PC-3 (cell line): ENCODE measurements at regions of chrX and their contacts with region 1.

Region 1: DNA sequence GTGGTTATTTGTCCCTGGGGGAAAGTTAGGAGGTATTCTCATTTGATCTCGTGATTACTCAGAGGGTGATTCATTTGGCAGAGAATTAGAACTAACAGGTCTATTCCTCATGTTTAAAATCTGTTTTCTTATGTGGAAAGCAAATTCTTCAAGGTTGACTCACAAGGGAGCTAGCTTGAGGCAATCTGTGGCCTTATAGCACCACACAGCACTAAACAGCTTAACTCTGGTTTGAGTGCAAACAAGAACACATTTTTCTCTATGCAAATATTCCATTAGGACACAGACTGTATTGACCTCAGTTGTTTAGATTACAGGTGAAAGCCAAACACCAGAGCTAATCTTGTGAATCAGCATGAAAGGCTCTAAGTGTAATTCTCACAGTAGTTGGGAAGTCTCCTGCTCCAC is 694.4 kb upstream of the POU3F4 start:
- DNase-seq: peak; percentile 97
- ATAC-seq: peak; percentile 92
- H3K4me3 ChIP-seq: no peak overlapping the region
- H3K27ac ChIP-seq: peak overlapping the region; percentile 80
- H3K4me1 ChIP-seq: peaks cover 35% of the 10 kb centered on the region
- H3K27me3 ChIP-seq: no peaks in the 10 kb centered on the region
- CTCF ChIP-seq: no peak

Region 2: GRCh38 chrX:82528525-82528924 is 285.1 kb before region 1 on chrX:
- CTCF ChIA-PET with region 1: no interaction called
- POLR2A ChIA-PET with region 1: no interaction called
- intact Hi-C with region 1: no loop called
- DNase-seq: no peak
- ATAC-seq: no peak
- H3K4me3 ChIP-seq: no peak overlapping the region
- H3K27ac ChIP-seq: no peak overlapping the region
- H3K4me1 ChIP-seq: no peaks in the 10 kb centered on the region
- H3K27me3 ChIP-seq: no peaks in the 10 kb centered on the region
- CTCF ChIP-seq: no peak

Region 3: DNA sequence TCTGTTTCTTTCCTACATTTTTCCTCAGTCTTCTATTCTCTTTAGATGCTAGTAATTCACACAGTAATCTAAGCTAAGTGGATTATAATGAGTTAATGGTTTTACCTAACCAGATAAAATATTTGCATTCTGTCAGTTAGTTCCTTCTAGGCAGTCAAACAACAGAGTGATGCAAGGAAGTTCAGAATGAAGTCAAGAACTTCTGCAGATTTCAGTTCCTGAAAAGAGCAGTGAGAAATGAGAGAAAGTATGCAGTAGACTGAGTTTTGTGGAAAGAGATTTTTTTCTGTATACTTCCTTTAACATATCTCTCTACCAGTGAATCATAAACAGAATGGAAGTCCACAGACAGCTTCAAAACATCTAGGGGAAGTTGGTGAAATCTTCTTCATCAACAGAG is 79.5 kb before region 1 on chrX:
- CTCF ChIA-PET with region 1: no interaction called
- POLR2A ChIA-PET with region 1: no interaction called
- intact Hi-C with region 1: loop called (anchors 5 kb)
- DNase-seq: no peak
- ATAC-seq: no peak
- H3K4me3 ChIP-seq: no peak overlapping the region
- H3K27ac ChIP-seq: no peak overlapping the region
- H3K4me1 ChIP-seq: no peaks in the 10 kb centered on the region
- H3K27me3 ChIP-seq: no peaks in the 10 kb centered on the region
- CTCF ChIP-seq: no peak

Region 4: DNA sequence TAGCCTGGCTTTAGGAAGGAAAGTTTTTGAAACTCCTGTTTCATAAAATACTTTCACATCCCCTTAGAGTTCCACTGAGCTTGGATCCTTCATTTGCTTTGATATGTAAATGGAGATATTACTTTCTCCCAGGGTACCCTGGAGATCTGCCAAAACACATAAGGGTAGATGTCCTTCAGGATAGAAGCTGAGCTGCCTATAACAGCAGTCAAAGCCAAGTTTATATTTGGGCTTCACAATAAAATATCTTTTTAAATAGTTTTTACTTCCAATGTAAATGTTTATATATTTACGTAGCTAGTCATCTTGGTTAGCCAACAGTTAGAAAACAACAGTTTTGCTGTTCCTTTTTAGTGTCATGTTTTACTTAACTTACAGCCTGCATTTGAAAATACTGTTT is 47.9 kb before region 1 on chrX:
- CTCF ChIA-PET with region 1: no interaction called
- POLR2A ChIA-PET with region 1: no interaction called
- intact Hi-C with region 1: loop called (anchors 5 kb)
- DNase-seq: peak; percentile 45
- ATAC-seq: peak; percentile 87
- H3K4me3 ChIP-seq: no peak overlapping the region
- H3K27ac ChIP-seq: peak overlapping the region; percentile 25; the same call in 1 of the 2 replicates
- H3K4me1 ChIP-seq: no peaks in the 10 kb centered on the region
- H3K27me3 ChIP-seq: no peaks in the 10 kb centered on the region
- CTCF ChIP-seq: no peak

Region 5: DNA sequence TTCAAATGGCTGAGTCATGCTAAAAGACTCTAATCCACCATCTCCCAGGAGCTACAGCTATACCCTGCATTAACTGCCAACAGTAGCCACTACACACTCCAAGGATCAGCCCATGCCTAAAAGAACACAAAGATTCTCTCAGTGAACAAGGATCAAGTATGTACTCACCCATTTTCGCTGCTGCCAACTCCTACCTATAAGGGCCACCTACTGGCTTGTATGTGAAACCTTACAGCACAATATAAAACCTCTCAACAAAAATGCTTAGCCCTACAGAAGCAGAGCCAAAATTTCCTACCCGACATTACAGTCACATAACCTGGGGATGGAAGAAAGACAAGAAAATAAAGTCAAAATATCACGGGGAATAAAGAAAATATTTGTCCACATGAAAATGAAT is 131.6 kb after region 1 on chrX:
- CTCF ChIA-PET with region 1: no interaction called
- POLR2A ChIA-PET with region 1: no interaction called
- intact Hi-C with region 1: loop called (anchors 10 kb)
- DNase-seq: peak; percentile 31
- ATAC-seq: peak; percentile 64
- H3K4me3 ChIP-seq: no peak overlapping the region
- H3K27ac ChIP-seq: no peak overlapping the region
- H3K4me1 ChIP-seq: no peaks in the 10 kb centered on the region
- H3K27me3 ChIP-seq: no peaks in the 10 kb centered on the region
- CTCF ChIP-seq: peak; percentile 46